ENCODE measurements at regions of chr15 and their contacts with region 1.

Region 1: DNA sequence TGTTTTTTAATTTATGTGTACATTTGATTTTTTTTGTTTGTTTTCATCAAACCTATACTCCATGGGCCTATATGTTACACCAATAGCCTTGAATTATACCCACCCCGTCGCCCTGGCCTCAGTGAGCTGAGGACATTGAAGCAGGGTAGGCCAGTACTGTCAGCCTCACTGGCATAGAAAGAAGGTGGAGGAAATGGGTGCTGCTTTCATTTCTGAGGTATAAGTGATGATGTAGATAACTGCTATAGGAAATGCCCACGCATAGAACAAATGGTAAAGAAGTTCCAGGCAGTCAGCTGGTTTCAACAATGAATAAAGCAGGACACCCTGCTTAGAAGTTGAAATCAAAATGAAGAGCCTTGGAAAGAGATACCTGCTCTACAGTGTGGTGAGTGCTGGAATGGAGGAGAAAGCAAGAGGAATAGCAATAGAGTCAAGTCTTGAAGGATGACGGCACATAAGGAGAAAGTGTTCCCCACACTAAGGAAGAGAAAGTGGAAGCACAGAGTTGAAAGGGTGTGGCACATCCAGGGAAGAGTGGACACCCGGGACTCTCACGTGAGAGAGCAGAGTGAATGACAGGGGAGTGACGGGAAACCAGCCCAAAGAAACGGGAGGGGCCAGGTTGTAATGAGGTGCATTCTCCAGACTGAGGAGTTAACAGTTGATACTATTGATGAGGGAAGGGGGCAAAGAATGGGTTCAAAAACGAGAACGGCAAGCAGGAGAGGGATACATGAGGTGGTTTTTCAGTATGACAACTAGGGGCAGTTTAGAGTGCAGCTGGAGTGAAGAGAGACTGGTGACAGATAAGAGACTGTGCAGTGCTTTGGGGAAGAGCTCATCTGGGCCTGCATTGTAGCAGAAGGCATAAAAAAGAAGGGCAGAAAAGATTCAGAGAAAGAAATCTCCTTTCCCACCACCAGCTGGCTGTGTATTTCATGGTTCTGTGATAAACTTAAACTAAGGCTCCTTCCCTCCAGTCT is 70.5 kb downstream of the KLHL25 start:
- DNase-seq: no peak
- H3K4me3 ChIP-seq: no peak overlapping the region
- H3K27ac ChIP-seq: peak overlapping the region in 13 of 59 donors; percentile 3 to 52 (median 29)
- H3K27me3 ChIP-seq: no peaks in the 10 kb centered on the region
- CTCF ChIP-seq: no peak

Region 2: GRCh38 chr15:85749261-85750151 is 25.3 kb after region 1 on chr15:
- intact Hi-C with region 1: loop called in 1 of 2 experiments (anchors 2 kb)
- DNase-seq: peak in 4 of 10 donors; percentile 28 to 67 (median 65)
- H3K4me3 ChIP-seq: peak overlapping the region in 36 of 59 donors; percentile 2 to 42 (median 22)
- H3K27ac ChIP-seq: peak overlapping the region in 54 of 59 donors; percentile 6 to 90 (median 76)
- H3K27me3 ChIP-seq: peaks cover 0 to 5% (median 0%) of the 10 kb centered on the region in 45 donors
- CTCF ChIP-seq: no peak

Region 3: DNA sequence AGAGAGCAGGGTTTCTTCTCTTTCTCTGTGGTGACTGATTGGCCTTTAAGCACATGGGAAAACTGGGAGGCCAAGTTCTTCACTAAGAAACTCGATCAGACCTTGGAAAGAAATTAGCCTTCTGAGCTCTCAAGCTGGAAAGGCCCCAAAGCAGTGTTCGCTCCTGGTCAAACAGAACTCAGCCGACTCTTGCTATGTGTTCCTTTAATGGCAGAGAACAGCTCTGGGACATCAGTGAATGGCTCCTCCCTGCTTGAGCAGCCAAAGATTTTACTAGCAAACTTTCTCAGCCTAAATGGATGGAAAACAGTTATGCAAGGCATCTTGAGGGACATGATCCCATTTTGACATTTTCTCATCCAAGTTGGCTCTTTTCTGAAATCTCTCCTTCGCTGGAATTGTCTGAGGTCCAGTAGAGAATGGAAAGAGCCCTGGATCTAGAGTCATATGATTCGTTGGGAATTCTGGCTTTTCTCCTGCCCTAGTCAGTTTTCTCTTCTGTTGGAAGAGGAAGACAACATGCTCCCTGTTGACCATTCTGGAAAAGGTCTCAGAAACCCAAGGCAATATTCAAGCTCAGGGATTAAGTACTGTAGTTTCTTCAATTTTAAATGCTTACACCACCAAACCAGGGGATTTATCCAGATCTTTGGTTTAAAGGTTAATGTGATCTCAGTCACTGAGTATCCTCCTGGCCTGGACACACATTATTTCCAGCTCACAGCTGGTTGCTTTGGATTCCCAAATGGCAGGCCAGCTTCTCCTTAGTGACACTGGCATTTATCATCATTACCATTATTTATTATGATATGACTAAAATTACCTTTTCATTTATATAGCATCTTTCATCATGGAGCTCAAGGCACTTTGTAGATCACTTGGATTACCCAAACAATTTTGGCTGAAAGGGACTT is 675.0 kb after region 1 on chr15:
- intact Hi-C with region 1: no loop called
- DNase-seq: no peak
- H3K4me3 ChIP-seq: no peak overlapping the region
- H3K27ac ChIP-seq: no peak overlapping the region
- H3K27me3 ChIP-seq: peaks cover 0 to 2% (median 0%) of the 10 kb centered on the region in 45 donors
- CTCF ChIP-seq: no peak

Measured in dorsolateral prefrontal cortex (tissue), 120 donors.